AG04450 (cell line): ENCODE measurements at regions of chr6 and their contacts with region 1.

Region 1: GRCh38 chr6:35496841-35497570 is at the start of gene TEAD3:
- DNase-seq: no peak
- H3K4me3 ChIP-seq: peak within 1 kb of the TSS; percentile 78
- H3K27ac ChIP-seq: peak within 1 kb of the TSS; percentile 88
- H3K27me3 ChIP-seq: no peaks in the 10 kb centered on the region
- CTCF ChIP-seq: no peak
- polyA plus RNA-seq, gene TEAD3: 16.6 and 22.8 TPM in 2 replicates

Region 2: GRCh38 chr6:35468181-35468979 is 28.6 kb before region 1 on chr6 and contains the start of gene RPL10A:
- CTCF ChIA-PET with region 1: interaction called, 7 read pairs
- POLR2A ChIA-PET with region 1: interaction called, 21 read pairs
- DNase-seq: peak; percentile 92
- H3K4me3 ChIP-seq: peak within 1 kb of the TSS; percentile 93
- H3K27ac ChIP-seq: peak within 1 kb of the TSS; percentile 86
- H3K27me3 ChIP-seq: no peaks in the 10 kb centered on the region
- CTCF ChIP-seq: peak; percentile 94
- polyA plus RNA-seq, gene RPL10A: 2,636 and 2,921 TPM in 2 replicates

Region 3: DNA sequence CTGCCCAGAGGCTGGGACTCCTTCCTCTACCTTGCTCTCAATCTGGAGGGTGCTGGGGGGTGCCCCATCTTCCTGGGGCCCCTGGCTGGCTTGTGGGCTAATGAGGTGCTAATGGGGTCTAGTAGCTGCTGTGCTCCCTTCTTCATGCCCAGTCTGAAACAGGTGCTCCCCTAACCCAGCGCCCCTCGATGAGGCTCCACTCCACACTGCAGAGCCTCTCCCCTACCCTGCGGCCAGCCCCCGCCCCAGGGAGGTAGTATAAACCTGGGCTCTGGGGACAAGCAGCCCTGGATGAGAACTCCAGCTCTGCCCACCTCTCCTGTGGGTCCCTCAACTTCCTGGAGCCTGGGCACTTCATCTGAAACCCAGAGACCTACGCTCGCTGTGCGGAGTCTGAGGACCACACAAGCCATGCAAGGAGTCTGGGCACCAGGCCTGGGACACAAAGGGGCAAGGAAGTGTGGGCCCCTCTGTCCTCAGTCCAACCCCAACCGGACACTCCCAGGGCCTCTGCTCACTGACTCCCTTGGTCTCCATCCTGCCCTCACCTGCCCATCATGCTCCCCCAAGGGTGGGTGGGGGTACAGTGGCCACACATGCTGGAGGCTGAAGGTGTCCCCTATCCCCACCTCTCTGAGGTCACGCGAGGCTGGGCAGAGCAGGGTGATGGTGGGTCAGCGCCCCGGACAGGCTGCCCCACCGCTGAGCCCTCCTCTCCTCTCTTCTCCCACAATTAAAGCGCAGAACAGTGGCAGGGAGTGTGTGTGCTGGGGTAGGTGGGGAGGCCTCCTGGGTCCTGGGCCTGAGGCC is 22.7 kb before region 1 on chr6:
- CTCF ChIA-PET with region 1: no interaction called
- POLR2A ChIA-PET with region 1: interaction called, 21 read pairs
- DNase-seq: no peak
- H3K4me3 ChIP-seq: no peak overlapping the region
- H3K27ac ChIP-seq: peak overlapping the region; percentile 39
- H3K27me3 ChIP-seq: no peaks in the 10 kb centered on the region
- CTCF ChIP-seq: no peak